Right ventricle myocardium inferior (tissue), 1 donor: ENCODE measurements at regions of chr9 and their contacts with region 1.

Region 1: DNA sequence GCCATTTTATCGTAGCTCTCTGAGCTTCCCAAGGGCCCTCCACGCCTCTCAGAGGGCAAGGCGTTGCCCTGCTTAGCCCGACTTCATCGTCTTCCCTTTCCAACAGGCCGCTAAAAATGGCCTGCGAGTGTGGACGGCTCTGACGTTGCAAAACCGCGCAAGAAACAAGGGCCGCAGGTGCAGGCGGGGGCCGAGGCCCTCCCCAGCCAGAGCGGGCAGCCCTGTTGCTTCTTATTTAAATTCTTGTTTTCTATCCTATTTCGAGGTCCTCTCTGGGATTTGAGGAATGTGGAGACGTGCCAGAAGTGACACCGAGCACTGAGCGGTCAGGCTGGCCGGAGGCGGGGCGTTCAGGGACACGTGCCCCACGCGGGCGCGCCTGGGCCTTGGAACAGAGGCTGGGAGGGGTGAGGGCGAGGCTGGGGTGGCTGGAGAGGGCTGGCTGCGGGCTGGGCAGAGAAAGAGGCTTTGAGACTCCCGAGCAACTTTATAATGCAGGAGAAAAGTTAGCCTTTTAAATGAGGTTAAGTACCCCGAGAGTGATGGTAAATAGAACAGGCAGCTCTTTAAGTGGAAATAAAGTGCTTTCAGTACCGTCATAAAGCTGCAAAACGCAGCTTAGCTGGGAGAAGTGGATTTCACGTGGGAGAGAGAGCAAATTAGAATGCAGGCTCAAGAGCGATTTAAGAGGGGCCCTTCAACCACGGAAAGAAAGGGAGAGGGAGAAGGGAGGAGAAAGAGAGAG is 243.6 kb downstream of the AUH start:
- DNase-seq: peak; percentile 94
- ATAC-seq: peak; percentile 97

Region 2: GRCh38 chr9:91361291-91362050 is 243.3 kb after region 1 on chr9 and contains the start of gene AUH:
- intact Hi-C with region 1: loop called (anchors 5 kb)
- DNase-seq: peak; percentile 95
- ATAC-seq: peak; percentile 98
- total RNA-seq, gene AUH: 37.9 TPM